Activated CD4-positive, alpha-beta memory T cell treated with anti-CD3 and anti-CD28 coated beads for 36 hours (primary cell): ENCODE measurements at regions of chr1 and their contacts with region 1.

Region 1: DNA sequence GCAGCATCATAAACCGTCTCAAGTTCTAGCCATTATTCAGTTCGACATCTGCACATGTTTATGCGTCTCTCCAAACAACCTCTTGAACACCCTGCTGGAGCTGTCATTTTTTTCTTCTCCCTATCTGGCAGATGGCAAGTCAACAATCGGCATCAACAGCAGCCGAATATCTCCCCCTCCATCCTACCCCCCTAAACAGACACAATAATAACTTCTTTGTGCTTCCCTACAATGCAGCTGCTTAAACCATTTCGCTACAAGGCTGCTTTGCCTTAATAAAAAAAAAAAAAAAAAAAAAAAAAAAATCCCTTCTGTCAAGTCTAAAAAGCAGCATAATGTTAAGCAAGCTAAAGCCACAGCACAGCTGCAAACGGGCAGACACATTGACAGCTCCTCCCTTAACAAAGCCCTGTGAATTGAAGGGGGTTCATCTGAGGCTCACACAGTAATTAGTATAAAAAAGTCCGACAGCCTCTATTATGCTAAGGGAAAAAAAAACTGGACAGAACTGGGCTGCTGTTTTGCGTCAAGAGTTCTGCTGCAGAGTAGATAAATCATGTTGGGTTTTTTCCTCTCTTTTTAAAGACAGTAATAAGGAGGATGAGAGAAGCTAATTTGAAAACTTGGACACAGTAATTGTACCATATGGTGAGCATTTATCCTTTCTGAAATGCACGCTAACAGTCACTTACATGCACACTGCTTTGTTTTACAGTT is 136.4 kb downstream of the AKT3 start:
- DNase-seq: no peak
- H3K4me3 Mint-ChIP-seq: no peak overlapping the region
- H3K27ac Mint-ChIP-seq: no peak overlapping the region
- H3K4me1 Mint-ChIP-seq: peaks cover 27% of the 10 kb centered on the region
- H3K27me3 Mint-ChIP-seq: no peaks in the 10 kb centered on the region

Region 2: GRCh38 chr1:243433737-243434370 is 279.8 kb before region 1 on chr1:
- CTCF ChIA-PET with region 1: no interaction called
- POLR2A ChIA-PET with region 1: no interaction called
- intact Hi-C with region 1: no loop called
- DNase-seq: no peak
- H3K4me3 Mint-ChIP-seq: no peak overlapping the region
- H3K27ac Mint-ChIP-seq: no peak overlapping the region
- H3K4me1 Mint-ChIP-seq: peaks cover 4% of the 10 kb centered on the region
- H3K27me3 Mint-ChIP-seq: no peaks in the 10 kb centered on the region

Region 3: DNA sequence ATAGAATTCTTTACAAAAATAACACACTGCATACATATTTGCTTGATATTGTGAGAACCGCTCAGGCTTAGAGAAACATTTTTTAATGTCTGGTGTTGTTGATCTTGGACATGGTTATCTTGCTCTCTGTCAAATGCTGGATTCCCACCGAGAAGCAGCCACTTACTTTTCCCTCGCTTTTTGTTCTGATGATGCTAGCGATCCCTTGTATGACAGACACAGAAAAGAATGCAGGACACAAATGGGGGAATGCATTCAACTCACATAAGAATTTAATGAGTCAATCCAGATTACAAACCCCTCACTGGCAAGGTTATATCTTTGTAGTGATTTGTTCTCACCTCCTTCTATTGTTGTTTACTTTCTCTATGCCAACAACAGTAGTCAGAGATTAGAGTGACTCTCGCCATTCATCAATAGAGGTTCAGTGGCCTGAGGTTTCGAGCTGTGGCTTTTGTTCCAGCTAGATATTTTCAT is 213.2 kb after region 1 on chr1:
- CTCF ChIA-PET with region 1: no interaction called
- POLR2A ChIA-PET with region 1: no interaction called
- intact Hi-C with region 1: no loop called
- DNase-seq: no peak
- H3K4me3 Mint-ChIP-seq: no peak overlapping the region
- H3K27ac Mint-ChIP-seq: no peak overlapping the region
- H3K4me1 Mint-ChIP-seq: no peaks in the 10 kb centered on the region
- H3K27me3 Mint-ChIP-seq: peaks cover 18% of the 10 kb centered on the region

Region 4: DNA sequence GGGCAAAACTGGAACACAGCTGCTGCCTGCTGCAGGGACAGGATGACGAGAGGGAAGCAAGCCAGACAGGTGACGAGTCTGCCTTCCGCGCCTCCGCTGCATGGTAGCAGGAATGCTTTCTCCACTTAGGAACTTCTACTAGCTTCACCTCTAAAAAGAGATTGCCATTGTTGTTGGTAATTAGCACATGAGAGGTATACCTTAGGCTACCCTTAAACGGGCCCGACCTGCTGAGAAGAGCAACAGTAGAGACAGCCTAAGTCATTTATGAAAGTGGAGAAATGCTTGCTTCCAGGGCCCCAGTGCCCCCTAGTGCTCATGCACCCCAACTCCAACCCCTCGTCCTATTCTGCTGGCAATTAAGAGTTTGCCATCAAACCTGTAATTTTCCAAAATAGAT is 233.3 kb after region 1 on chr1:
- CTCF ChIA-PET with region 1: no interaction called
- POLR2A ChIA-PET with region 1: no interaction called
- intact Hi-C with region 1: loop called (anchors 10 kb)
- DNase-seq: peak; percentile 56
- H3K4me3 Mint-ChIP-seq: no peak overlapping the region
- H3K27ac Mint-ChIP-seq: no peak overlapping the region
- H3K4me1 Mint-ChIP-seq: peaks cover 1% of the 10 kb centered on the region
- H3K27me3 Mint-ChIP-seq: peaks cover 5% of the 10 kb centered on the region